PC-3 (cell line): ENCODE measurements at regions of chr14 and their contacts with region 1.

Region 1: GRCh38 chr14:61178226-61179060 is 102.7 kb downstream of the TMEM30B start:
- DNase-seq: peak; percentile 99
- ATAC-seq: peak; percentile 91
- H3K4me3 ChIP-seq: peak overlapping the region; percentile 20; the same call in 1 of the 2 replicates
- H3K27ac ChIP-seq: peak overlapping the region; percentile 93
- H3K4me1 ChIP-seq: peaks cover 39% of the 10 kb centered on the region
- H3K27me3 ChIP-seq: no peaks in the 10 kb centered on the region
- CTCF ChIP-seq: no peak

Region 2: DNA sequence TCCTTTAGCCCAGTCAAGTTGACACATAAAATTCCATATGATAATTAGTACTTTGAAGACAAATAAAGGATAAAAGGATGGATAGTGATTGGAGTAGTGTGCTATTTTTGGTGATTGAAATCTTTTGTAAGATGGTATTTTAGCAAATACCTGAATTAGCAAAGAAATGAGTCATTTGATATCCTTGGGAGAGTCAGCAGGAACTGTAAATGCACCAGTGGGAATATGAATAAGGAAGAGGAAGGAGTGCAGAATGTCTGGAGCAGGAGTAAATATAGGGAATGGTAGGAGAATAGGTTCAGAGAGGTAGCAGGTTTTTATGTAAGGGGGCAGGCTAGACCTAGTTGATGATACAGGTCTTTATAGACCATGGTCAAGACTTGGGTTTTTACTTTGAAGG is 272.5 kb before region 1 on chr14:
- CTCF ChIA-PET with region 1: no interaction called
- POLR2A ChIA-PET with region 1: no interaction called
- intact Hi-C with region 1: no loop called
- DNase-seq: peak; percentile 43
- ATAC-seq: peak; percentile 94
- H3K4me3 ChIP-seq: no peak overlapping the region
- H3K27ac ChIP-seq: no peak overlapping the region
- H3K4me1 ChIP-seq: no peaks in the 10 kb centered on the region
- H3K27me3 ChIP-seq: no peaks in the 10 kb centered on the region
- CTCF ChIP-seq: no peak

Region 3: DNA sequence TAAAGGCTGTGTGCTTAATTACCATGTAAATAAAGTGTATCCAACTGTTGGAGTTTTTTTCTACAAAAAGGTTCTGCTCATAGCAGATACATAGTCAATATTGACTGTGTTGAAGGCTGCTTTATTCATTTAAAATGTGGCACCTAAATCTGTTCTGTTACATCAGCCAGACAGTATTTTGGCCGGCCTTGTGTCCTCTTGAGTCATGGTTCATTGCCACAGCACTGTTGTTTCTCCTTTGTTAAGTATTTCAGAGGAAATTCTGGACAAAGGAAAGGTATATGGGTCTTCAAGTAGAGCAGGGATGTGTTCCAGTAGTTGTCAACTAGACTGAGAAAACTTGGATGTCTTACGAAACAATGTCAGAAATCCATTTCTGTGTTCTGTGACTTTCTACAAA is 101.9 kb before region 1 on chr14:
- CTCF ChIA-PET with region 1: no interaction called
- POLR2A ChIA-PET with region 1: interaction called, 6 read pairs
- intact Hi-C with region 1: loop called (anchors 5 kb)
- DNase-seq: no peak
- ATAC-seq: peak; percentile 4; the same call in 1 of the 2 replicates
- H3K4me3 ChIP-seq: no peak overlapping the region
- H3K27ac ChIP-seq: peak overlapping the region; percentile 82
- H3K4me1 ChIP-seq: peaks cover 33% of the 10 kb centered on the region
- H3K27me3 ChIP-seq: no peaks in the 10 kb centered on the region
- CTCF ChIP-seq: no peak

Region 4: GRCh38 chr14:61694830-61695694 is 516.6 kb after region 1 on chr14 and contains the start of gene HIF1A:
- CTCF ChIA-PET with region 1: no interaction called
- POLR2A ChIA-PET with region 1: no interaction called
- intact Hi-C with region 1: no loop called
- DNase-seq: peak; percentile 100
- ATAC-seq: peak; percentile 90
- H3K4me3 ChIP-seq: peak within 1 kb of the TSS; percentile 86
- H3K27ac ChIP-seq: peak within 1 kb of the TSS; percentile 81
- H3K4me1 ChIP-seq: peaks cover 34% of the 10 kb centered on the region
- H3K27me3 ChIP-seq: no peaks in the 10 kb centered on the region
- CTCF ChIP-seq: peak; percentile 49
- total RNA-seq, gene HIF1A: 266 and 319 TPM in 2 replicates